Posterior vena cava (tissue), 2 donors: ENCODE measurements at regions of chr1 and their contacts with region 1.

Region 1: GRCh38 chr1:43991476-43992231 is at the start of gene CCDC24:
- DNase-seq: peak; percentile 97
- total RNA-seq, gene CCDC24: 2.5 to 4.1 TPM

Region 2: DNA sequence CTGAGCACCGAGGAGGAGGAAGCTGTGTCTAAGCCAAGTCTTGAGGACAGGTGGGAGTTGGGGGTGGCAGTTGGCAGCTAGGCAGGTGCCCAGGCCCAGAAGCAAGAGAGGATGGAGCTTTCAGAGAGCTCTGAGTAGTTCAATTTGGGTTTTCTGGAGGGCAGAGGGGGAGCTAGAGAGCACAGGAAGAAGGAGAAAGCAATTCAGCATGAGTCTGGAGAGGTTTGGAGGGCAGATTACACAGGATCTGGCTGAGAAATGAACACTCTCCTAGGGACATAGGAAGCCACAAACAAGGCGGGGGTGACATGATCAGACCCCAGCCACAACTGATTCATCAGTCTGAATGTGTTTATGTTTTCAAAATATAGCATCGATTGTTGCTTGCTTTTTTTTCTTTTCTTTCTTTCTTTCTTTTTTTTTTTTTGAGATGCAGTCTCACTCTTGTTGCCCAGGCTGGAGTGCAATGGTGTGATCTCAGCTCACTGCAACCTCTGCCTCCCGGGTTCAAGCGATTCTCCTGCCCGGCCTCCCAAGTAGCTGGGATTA is 437.1 kb before region 1 on chr1:
- intact Hi-C with region 1: loop called in 1 of 2 experiments (anchors 5 kb)
- DNase-seq: no peak

Region 3: GRCh38 chr1:44029906-44030604 is 38.4 kb after region 1 on chr1:
- intact Hi-C with region 1: loop called in 1 of 2 experiments (anchors 5 kb)
- DNase-seq: peak; percentile 96